GM18951 (cell line): ENCODE measurements at regions of chr1 and their contacts with region 1.

Region 1: GRCh38 chr1:230917284-230918135 is 49.2 kb upstream of the C1orf198 start:
- POLR2A ChIP-seq: no peak

Region 2: DNA sequence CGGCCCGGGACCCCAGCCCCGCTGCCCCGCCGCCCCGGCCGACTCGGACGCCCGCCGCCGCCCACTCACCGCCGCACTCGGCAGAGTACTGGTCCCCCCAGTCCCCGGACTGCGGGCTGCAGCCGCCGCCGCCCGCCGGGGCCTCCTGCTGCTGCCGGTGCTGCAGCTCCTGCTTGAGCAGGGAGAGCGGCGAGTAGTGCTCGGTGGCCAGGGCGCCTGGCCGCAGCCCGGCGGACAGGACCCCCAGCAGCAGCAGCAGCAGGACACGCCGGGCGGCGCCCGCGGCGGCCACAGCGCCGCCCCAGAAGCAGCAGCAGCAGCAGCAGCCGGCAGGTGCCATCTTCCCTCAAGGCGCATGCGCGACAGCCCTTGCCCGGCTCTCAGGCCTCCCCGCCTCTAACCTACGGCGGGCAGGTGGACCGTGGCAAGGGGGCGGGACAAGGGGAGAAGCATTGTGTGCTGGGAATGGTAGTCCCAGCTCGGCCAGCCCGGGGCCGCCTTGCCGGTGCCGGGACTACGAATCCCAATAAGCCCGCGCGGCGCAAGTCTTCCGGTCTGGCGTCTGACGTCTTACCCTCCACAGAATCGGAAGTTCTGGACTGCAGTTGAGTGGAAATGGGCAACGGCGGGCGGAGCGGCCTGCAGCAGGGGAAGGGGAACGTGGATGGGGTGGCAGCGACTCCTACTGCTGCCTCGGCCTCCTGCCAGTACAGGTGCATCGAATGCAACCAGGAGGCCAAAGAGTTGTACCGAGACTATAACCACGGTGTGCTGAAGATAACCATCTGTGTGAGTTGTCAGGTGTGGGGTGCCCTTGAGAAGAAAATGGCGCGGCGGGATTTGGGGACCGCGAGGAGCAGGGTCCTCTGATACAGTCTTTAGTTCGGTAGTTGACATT is 61.2 kb after region 1 on chr1 and contains the starts of genes ARV1 and TTC13:
- in situ Hi-C with region 1: loop called (anchors 10 kb)
- POLR2A ChIP-seq: peak; percentile 82

Region 3: GRCh38 chr1:231040019-231040799 is 122.7 kb after region 1 on chr1 and contains the start of gene FAM89A:
- in situ Hi-C with region 1: no loop called
- POLR2A ChIP-seq: no peak

Region 4: DNA sequence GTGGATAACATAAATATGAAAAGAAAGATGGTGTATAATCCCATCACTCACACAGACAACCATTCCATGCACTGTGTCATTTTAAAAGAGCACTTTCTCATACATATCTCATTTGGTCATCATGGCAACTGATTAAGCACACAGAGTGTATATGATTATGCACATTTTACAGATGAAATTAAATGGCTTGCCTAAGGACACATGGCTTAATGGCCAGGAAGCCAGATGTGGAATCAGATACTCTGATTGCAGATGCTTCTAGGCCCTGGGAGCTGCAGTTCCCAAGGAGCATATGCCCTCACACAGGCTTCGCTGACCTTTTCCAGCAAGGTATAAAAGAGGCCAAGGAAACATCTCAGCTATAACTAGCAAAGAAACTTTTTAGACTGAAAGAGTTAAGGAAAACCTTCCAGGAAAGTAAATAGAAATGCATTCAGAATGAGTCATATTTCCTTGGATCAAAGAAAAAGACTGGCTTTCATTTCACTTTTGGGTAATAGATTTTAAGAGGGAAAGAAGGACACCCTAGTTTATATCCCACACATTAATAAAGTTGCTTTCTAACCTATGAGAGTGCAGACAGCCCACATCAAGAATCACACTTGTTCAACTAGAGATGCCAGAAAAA is 142.2 kb after region 1 on chr1:
- in situ Hi-C with region 1: no loop called
- POLR2A ChIP-seq: no peak

Region 5: GRCh38 chr1:231192620-231193163 is 275.2 kb after region 1 on chr1:
- in situ Hi-C with region 1: loop called (anchors 25 kb)
- POLR2A ChIP-seq: no peak